Aorta (tissue), 5 donors: ENCODE measurements at regions of chr11 and their contacts with region 1.

Region 1: GRCh38 chr11:108871152-108871551 is 206.3 kb downstream of the DDX10 start:
- DNase-seq: peak in 1 of 2 donors; percentile 77
- ATAC-seq: peak; percentile 71
- H3K4me3 ChIP-seq: no peak overlapping the region
- H3K27ac ChIP-seq: no peak overlapping the region
- H3K4me1 ChIP-seq: peaks cover 0 to 2% of the 10 kb centered on the region in 2 donors
- H3K27me3 ChIP-seq: no peaks in the 10 kb centered on the region

Region 2: DNA sequence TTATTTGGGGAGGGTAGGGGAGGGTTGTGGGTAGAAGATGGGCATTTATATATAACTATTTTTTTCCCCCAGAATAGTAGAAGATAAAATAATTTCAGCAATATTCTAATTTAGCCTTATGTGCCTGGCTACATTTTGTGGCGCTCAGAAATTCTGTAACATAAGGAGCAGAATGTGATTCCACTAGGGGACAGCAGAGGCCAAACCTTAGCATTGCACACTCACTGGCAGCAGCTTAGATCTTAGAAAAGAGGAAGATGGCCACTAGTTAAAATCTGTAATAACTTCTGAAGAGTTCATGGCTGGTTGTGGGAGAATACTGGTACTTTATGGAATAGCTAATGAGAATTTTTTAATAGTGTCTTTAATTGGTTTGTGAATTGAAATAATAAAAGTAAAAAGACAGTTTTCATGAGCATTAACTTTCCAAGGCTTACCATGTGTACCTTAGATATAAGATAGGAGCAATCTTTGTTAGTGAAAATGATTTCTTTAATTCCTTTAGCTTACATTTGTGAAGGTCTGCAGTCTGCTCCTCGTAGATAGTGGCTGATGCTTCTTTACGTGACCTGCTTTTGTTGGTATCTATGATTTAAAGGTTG is 173.2 kb before region 1 on chr11:
- intact Hi-C with region 1: loop called (anchors 5 to 10 kb)
- DNase-seq: peak in 1 of 2 donors; percentile 55
- ATAC-seq: peak; percentile 82
- H3K4me3 ChIP-seq: no peak overlapping the region
- H3K27ac ChIP-seq: no peak overlapping the region
- H3K4me1 ChIP-seq: no peaks in the 10 kb centered on the region
- H3K27me3 ChIP-seq: no peaks in the 10 kb centered on the region

Region 3: DNA sequence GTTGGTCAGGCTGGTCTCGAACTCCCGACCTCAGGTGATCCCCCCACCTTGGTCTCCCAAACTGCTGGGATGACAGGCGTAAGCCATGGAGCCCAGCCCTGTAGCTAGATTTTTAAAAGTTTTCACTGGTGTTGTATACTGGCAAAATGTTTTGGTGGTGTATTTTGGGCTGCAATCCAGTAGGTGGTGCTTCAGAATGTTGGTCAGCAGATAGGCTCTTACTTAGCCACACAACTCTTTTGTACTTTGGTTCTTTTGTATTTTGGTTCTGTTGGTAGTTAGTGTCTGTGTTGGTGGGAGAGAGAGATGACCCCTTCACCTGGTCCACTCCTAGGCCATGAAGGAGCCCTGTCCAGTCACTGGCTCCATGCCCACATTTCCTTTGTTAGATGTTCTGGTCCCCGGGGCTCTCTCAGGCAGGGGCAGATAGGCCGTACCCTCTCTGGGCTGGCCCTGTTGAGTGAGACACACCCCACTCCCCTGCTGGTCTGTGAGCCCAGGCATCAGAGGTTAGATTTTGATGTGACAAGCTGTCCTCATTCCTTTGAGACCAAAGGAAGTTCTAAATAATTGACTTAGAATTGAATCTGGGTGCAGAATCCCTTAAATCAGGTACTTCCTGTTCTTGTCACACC is 82.5 kb before region 1 on chr11:
- intact Hi-C with region 1: loop called in 1 of 2 experiments (anchors 5 kb)
- DNase-seq: no peak
- ATAC-seq: no peak
- H3K4me3 ChIP-seq: no peak overlapping the region
- H3K27ac ChIP-seq: no peak overlapping the region
- H3K4me1 ChIP-seq: no peaks in the 10 kb centered on the region
- H3K27me3 ChIP-seq: no peaks in the 10 kb centered on the region

Region 4: GRCh38 chr11:108817971-108818370 is 53.2 kb before region 1 on chr11:
- intact Hi-C with region 1: no loop called
- DNase-seq: no peak
- ATAC-seq: no peak
- H3K4me3 ChIP-seq: no peak overlapping the region
- H3K27ac ChIP-seq: no peak overlapping the region
- H3K4me1 ChIP-seq: no peaks in the 10 kb centered on the region
- H3K27me3 ChIP-seq: no peaks in the 10 kb centered on the region